ENCODE measurements at regions of chr1 and their contacts with region 1.

Region 1: GRCh38 chr1:26321315-26322041 is 3.7 kb downstream of the CD52 start:
- DNase-seq: peak; percentile 64 to 100
- H3K4me3 ChIP-seq: no peak overlapping the region
- H3K27ac ChIP-seq: no peak overlapping the region
- H3K4me1 ChIP-seq: peaks cover 4 to 8% (median 6%) of the 10 kb centered on the region in 4 experiments
- H3K27me3 ChIP-seq: no peaks in the 10 kb centered on the region
- CTCF ChIP-seq: peak; percentile 83 to 97 (median 92)
- EP300 ChIP-seq: no peak
- POLR2A ChIP-seq: no peak
- RAD21 ChIP-seq: peak; percentile 96 to 98

Region 2: DNA sequence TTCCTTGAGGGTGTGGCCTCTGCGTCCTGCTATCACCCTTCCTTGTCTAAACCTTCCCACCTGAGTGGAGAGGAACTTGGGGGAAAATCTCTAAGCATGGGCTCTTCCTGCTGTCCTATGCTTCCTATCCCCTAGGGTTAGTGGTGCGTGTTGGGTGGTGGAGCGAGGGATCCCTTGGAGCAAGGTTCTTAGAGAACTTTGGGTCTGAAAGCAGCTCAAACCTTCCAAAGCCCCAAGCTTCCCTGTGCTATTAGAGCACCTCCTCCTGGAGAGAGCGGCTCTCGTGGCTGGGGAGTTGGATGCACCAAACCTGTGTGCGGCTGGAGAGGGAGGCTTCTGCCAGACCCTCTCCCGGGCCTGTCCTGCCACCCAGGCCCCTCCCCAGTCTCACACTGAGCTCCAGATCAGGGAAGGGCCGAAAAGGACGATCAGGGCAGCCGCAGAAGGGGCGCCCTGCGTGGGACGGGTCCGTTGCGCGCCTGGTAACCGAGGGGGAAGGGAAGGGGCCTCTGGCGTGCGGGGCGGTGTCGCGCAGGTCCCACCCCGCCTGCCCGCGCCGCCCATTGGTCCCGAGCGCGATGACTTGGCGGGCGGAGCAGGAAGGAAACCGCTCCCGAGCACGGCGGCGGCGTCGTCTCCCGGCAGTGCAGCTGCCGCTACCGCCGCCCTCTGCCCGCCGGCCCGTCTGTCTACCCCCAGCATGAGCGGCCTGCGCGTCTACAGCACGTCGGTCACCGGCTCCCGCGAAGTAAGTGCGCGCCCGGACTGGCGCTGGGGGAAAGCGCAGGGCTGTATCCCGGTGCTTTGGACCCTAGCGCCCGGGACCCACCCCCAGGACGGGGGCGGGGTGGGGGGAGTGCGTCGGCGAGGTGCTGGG is 41.8 kb before region 1 on chr1 and contains the start of gene SH3BGRL3:
- CTCF ChIA-PET with region 1: interaction called, 1,530 read pairs
- POLR2A ChIA-PET with region 1: interaction called, 27 read pairs
- DNase-seq: peak in 1 of 2 experiments; percentile 85
- H3K4me3 ChIP-seq: peak within 1 kb of the TSS; percentile 64 to 69 (median 64)
- H3K27ac ChIP-seq: peak within 1 kb of the TSS; percentile 26; the same call in 1 of the 2 replicates
- H3K4me1 ChIP-seq: peaks cover 10 to 34% (median 21%) of the 10 kb centered on the region in 4 experiments
- H3K27me3 ChIP-seq: no peaks in the 10 kb centered on the region
- CTCF ChIP-seq: peak in 2 of 3 experiments; percentile 57 to 75; a peak in 3 of 4 replicates
- EP300 ChIP-seq: no peak
- POLR2A ChIP-seq: peak in 1 of 2 experiments; percentile 63; a peak in 1 of 3 replicates
- RAD21 ChIP-seq: peak; percentile 48 to 51
- total RNA-seq, gene SH3BGRL3: 77.8 and 84.4 TPM in 2 replicates

Region 3: DNA sequence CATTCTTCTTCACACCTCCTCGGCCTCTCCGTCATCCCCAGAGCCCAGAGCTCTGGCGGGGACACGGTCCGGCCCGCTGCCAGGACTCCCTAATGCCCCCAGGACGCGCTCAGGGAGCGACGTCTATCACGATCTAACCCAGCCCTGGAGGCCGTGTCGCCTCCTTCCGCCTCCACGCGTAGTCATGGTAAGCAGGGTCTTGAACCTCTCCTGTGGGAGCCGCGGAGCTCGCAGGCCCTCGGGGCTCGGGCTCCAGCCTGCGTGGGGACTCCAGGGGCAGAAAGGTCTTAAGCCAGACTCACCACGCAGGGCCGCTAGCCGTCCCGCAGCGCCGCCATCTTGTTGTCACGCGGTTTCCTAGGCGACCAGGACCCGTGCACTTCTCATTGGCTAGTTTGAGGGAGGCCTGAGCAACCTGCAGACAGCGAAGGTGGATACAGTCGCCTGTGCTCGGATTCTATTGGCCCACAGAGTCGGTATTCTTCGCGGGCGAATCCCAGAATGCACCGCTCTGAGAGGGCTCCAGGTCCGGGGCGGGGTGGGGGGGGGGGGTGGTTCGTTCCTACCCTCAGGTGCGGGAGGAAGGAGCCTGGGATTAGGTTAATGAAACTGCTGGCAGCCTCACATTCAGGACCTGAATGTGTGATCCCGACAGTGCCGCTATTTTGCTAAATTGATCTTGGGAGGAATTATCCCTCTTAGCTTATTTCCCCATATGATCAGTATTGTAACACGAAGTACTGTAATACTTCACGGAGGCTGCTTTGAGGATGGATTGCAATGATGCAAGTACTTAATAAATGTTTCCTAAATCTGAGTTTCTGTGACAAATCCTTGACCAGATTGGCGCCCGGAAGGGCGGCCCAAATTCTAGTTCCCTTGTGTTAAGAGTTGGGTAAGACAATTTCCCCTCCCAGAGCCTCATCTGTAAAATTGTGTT is 14.9 kb before region 1 on chr1 and contains the start of gene UBXN11:
- CTCF ChIA-PET with region 1: interaction called, 1,530 read pairs
- POLR2A ChIA-PET with region 1: interaction called, 29 read pairs
- DNase-seq: peak; percentile 78 to 91
- H3K4me3 ChIP-seq: peak within 1 kb of the TSS; percentile 52 to 98 (median 96)
- H3K27ac ChIP-seq: peak within 1 kb of the TSS; percentile 75
- H3K4me1 ChIP-seq: peaks cover 0 to 5% (median 2%) of the 10 kb centered on the region in 4 experiments; a peak in 3 of 7 replicates
- H3K27me3 ChIP-seq: no peaks in the 10 kb centered on the region
- CTCF ChIP-seq: no peak
- EP300 ChIP-seq: no peak
- POLR2A ChIP-seq: peak in 1 of 2 experiments; percentile 55; a peak in 2 of 3 replicates
- RAD21 ChIP-seq: no peak
- total RNA-seq, gene UBXN11: 6.1 and 6.3 TPM in 2 replicates

Region 4: GRCh38 chr1:26336477-26337205 is 15.2 kb after region 1 on chr1:
- CTCF ChIA-PET with region 1: interaction called, 15 read pairs
- POLR2A ChIA-PET with region 1: interaction called, 14 read pairs
- DNase-seq: peak; percentile 67 to 97
- H3K4me3 ChIP-seq: peak overlapping the region; percentile 55 to 86 (median 68)
- H3K27ac ChIP-seq: 0 out of 2 replicates have a peak overlapping the region, but pooled peaks have one; percentile 39
- H3K4me1 ChIP-seq: peaks cover 3 to 12% (median 6%) of the 10 kb centered on the region in 4 experiments
- H3K27me3 ChIP-seq: peaks cover 0 to 11% (median 5%) of the 10 kb centered on the region in 4 experiments; a peak in 5 of 7 replicates
- CTCF ChIP-seq: no peak
- EP300 ChIP-seq: no peak
- POLR2A ChIP-seq: no peak
- RAD21 ChIP-seq: no peak

Region 5: DNA sequence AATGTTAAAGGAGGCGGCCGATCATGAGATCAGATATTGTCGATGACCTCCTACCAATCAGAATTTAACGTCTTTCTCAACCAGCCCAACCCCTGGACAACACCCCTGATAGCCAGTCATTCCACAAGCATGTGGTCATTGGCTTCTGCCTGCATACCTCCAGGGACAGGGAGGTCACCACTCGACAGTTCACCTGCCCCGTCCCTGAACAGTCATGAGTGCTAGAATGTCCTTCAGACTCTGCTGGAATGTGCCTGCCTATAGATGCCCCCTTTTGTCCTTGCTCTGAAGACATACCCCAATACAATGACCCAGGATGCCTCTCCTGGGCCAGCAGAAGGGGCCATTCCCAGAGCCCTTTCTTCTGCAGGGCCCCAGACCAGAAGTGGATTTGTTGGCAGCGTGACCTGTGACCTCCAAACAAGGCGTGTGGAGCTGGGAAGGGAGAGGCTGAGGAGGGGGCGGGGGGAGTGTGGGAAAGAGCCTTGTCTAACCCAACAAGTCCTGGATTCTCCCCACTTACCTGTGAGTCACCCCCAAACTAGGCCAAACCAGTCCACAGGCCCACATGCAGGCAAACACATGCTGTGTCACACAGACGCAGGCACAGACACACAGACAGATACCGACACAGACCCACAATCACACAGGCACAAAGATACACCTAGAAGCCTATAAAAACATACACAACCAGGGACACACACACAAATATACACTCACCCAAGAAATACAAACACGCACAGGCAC is 30.3 kb after region 1 on chr1:
- CTCF ChIA-PET with region 1: interaction called, 10 read pairs
- POLR2A ChIA-PET with region 1: interaction called, 4 read pairs
- DNase-seq: no peak
- H3K4me3 ChIP-seq: no peak overlapping the region
- H3K27ac ChIP-seq: no peak overlapping the region
- H3K4me1 ChIP-seq: peaks cover 7 to 28% (median 10%) of the 10 kb centered on the region in 4 experiments
- H3K27me3 ChIP-seq: no peaks in the 10 kb centered on the region
- CTCF ChIP-seq: no peak
- EP300 ChIP-seq: no peak
- POLR2A ChIP-seq: no peak
- RAD21 ChIP-seq: no peak

Region 6: DNA sequence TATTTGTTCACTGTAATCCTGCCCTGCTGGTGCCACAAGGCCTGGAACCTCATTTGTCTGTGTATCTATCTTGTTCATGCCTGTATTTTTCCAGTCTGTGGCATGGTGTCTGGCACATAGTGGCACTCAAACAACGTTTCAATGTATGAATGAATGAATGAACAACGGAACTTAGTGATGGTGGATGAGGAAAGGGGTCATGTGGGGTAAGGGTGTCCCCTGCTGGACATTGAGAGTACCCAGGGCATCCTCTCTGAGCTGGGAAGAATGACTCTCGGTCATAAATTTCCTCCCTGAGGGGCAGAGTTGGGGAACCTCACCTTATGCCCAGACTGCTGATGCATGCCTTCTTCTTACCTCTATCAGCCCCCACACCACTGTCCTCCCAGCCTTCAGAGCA is 70.0 kb after region 1 on chr1:
- CTCF ChIA-PET with region 1: interaction called, 22 read pairs
- POLR2A ChIA-PET with region 1: no interaction called
- DNase-seq: no peak
- H3K4me3 ChIP-seq: no peak overlapping the region
- H3K27ac ChIP-seq: no peak overlapping the region
- H3K4me1 ChIP-seq: peaks cover 1 to 10% (median 3%) of the 10 kb centered on the region in 4 experiments; a peak in 6 of 7 replicates
- H3K27me3 ChIP-seq: no peaks in the 10 kb centered on the region
- CTCF ChIP-seq: peak; percentile 81 to 93 (median 83)
- EP300 ChIP-seq: no peak
- POLR2A ChIP-seq: no peak
- RAD21 ChIP-seq: peak; percentile 94

Region 7: DNA sequence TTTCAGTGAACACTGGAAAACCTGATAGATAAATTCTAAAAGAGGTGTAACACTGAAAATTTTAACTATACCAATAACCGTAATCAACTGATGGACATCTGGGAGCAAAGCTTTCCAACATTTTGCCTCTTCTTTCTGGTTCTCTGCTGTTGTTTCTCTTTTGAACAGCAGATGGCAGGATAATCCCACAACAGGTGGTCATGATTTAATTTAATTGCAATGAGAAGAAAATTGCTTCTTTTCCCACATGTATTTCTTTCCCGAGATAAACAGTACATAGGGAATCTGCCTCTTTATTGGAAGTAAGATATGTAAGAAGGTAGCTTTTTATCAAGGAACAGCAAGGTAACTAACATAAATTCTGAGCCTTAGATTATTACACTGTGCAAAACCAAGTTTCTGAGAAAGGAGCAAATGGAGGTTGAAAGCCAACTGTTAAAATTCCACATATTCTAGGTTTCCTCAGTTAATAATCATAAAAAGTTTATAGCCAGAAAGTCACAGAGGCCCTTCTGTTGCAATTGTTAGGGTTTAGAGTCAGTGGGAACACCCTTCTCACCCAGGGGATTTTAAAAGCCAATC is 281.0 kb after region 1 on chr1:
- CTCF ChIA-PET with region 1: no interaction called
- POLR2A ChIA-PET with region 1: no interaction called
- DNase-seq: no peak
- H3K4me3 ChIP-seq: no peak overlapping the region
- H3K27ac ChIP-seq: no peak overlapping the region
- H3K4me1 ChIP-seq: no peaks in the 10 kb centered on the region; a peak in 1 of 7 replicates
- H3K27me3 ChIP-seq: no peaks in the 10 kb centered on the region
- CTCF ChIP-seq: peak in 2 of 3 experiments; percentile 74 to 75; a peak in 3 of 4 replicates
- EP300 ChIP-seq: no peak
- POLR2A ChIP-seq: no peak
- RAD21 ChIP-seq: peak; percentile 94 to 95

Measured in H1 (cell line).